Endothelial cell of umbilical vein (primary cell): ENCODE measurements at regions of chr1 and their contacts with region 1.

Region 1: DNA sequence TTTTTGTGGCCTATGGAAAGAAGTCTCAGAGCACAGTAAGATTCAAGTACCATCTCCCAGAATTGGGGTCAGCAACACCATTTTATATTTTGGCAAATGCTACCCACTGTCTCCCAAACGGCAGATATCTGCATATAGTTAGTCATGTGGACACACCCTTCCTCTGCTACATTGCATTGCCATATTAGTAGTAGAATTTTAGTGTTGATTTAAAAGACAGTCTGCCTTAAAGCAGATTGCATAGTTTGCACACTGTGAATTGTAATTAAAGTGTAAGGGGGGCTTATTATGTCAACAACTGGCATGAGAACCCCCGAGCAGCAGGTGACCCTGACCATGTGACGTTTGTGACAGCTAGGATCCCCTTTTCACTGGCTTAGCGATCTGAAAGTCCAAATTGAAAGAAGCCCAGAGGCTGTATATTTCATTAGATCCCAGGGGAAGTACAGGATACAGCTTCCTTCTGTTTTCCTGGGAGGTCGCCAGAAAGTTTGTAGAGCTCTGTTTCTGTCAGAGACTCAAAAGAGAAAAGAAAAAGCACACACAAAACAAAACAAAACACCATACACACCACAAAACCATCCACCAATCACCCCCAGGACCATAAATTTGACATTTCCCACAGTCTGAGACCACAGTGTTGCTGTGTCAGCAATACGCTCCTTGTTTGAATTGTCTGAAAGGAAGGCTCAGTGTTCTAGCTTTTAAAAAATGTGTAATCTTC is 172.4 kb downstream of the NFIA start:
- DNase-seq: peak; percentile 70
- H3K4me3 ChIP-seq: peak overlapping the region in 1 of 3 experiments; percentile 64
- H3K27ac ChIP-seq: peak overlapping the region; percentile 59
- H3K4me1 ChIP-seq: peaks cover 17% of the 10 kb centered on the region
- H3K27me3 ChIP-seq: no peaks in the 10 kb centered on the region
- CTCF ChIP-seq: no peak
- POLR2A ChIP-seq: no peak

Region 2: DNA sequence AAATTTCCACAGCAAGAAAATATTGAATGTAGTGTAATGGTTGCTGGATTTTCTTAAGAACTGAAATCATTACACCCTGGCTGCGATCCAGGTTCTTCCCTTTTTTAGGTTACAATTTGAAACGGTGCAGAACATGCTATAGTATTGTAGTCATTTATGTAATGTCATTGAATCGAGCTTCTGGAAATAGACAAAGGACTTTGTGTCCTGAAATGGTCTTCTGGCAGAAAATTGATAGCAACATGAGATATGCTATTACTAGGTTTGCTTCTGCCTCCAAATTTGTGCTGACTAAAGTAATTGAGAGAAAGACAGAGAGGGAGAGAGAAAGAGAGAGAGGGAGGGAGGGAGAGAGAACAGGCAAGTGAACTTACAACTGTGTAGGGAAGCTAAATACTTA is 318.6 kb before region 1 on chr1:
- CTCF ChIA-PET with region 1: no interaction called
- POLR2A ChIA-PET with region 1: no interaction called
- dilution Hi-C with region 1: no loop called
- intact Hi-C with region 1: no loop called
- DNase-seq: no peak
- H3K4me3 ChIP-seq: no peak overlapping the region
- H3K27ac ChIP-seq: no peak overlapping the region
- H3K4me1 ChIP-seq: peaks cover 11% of the 10 kb centered on the region
- H3K27me3 ChIP-seq: no peaks in the 10 kb centered on the region
- CTCF ChIP-seq: no peak
- POLR2A ChIP-seq: no peak

Region 3: DNA sequence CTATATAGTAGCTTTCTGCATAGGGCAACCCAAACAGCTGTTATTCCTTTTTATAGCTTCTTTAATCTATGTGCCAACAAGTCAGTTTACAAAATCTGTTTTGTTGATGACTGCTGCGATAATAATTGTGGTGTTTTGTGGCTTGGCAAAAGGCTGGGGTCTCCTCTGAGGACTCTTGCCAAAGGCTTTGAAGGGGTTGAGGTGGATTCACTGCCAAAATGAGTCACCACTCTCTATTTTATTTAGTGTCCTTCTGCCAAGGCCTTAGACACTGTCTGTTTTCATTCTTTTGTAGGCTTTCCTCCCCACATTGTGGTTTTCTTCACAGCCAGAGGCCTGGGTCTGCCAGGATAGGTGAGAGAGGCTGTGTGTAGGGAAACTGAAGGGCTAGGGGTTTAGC is 10.7 kb before region 1 on chr1:
- CTCF ChIA-PET with region 1: interaction called, 15 read pairs
- POLR2A ChIA-PET with region 1: no interaction called
- dilution Hi-C with region 1: no loop called
- intact Hi-C with region 1: no loop called
- DNase-seq: peak; percentile 85
- H3K4me3 ChIP-seq: no peak overlapping the region
- H3K27ac ChIP-seq: no peak overlapping the region
- H3K4me1 ChIP-seq: peaks cover 6% of the 10 kb centered on the region
- H3K27me3 ChIP-seq: no peaks in the 10 kb centered on the region
- CTCF ChIP-seq: no peak
- POLR2A ChIP-seq: no peak